ENCODE measurements at regions of chr2 and their contacts with region 1.

Region 1: DNA sequence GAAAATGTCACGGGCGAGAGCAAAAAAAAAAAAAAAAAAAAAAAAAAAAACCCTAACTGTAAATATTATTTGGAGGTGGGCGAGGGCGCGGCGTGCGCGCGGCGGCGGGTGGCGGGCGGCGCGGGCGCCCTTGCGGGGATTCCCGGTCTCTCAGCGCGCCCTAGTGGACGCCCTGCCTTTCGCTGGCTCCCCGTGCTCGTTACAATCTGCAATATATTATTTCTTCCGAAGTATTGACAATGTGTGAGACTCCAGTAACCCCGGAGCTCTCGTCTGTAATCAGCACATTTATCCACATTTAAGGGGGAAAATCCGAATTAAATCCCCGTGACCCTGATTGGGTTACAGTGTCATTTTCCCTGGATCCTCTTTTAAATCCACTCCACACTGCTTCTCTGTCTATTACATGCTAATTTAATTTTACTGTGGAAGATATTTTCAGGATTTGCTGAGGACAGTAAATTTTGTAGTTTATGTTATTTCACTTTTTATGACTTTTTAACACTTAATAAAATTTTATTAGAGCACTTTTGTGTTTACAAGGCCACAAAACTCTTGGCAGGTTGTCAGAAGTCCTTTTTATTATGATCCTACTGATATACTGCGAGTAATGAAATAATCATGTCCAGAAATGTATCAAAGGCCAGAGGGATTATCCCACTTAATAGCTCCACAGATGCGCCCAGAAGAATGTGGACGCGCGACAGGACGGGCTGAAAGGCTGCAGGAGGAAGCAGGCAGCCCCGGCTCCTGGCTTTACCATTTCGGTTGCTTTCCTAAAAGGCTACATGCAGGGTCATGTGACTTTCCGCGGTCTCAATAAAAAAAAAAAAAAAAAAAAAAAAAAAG is 369.1 kb downstream of the MTX2 start:
- DNase-seq: no peak
- ATAC-seq: peak; percentile 90
- H3K4me3 ChIP-seq: peak overlapping the region; percentile 65 to 66
- H3K27ac ChIP-seq: peak overlapping the region; percentile 79
- H3K4me1 ChIP-seq: no peaks in the 10 kb centered on the region
- H3K27me3 ChIP-seq: no peaks in the 10 kb centered on the region; the same call in 1 of the 2 replicates
- CTCF ChIP-seq: peak; percentile 92

Region 2: GRCh38 chr2:176126929-176127773 is 511.2 kb before region 1 on chr2:
- CTCF ChIA-PET with region 1: no interaction called
- POLR2A ChIA-PET with region 1: no interaction called
- in situ Hi-C with region 1: no loop called
- intact Hi-C with region 1: loop called (anchors 2 kb)
- DNase-seq: no peak
- ATAC-seq: peak; percentile 72; the same call in 1 of the 2 replicates
- H3K4me3 ChIP-seq: peak overlapping the region in 1 of 2 experiments; percentile 25; a peak in 1 of 4 replicates
- H3K27ac ChIP-seq: no peak overlapping the region
- H3K4me1 ChIP-seq: peaks cover 7% of the 10 kb centered on the region
- H3K27me3 ChIP-seq: no peaks in the 10 kb centered on the region
- CTCF ChIP-seq: peak; percentile 87

Region 3: GRCh38 chr2:176140513-176141317 is 497.7 kb before region 1 on chr2:
- CTCF ChIA-PET with region 1: interaction called, 5 read pairs
- POLR2A ChIA-PET with region 1: interaction called, 22 read pairs
- in situ Hi-C with region 1: no loop called
- intact Hi-C with region 1: loop called (anchors 2 kb)
- DNase-seq: no peak
- ATAC-seq: peak; percentile 92
- H3K4me3 ChIP-seq: peak overlapping the region; percentile 48 to 58
- H3K27ac ChIP-seq: peak overlapping the region; percentile 71
- H3K4me1 ChIP-seq: peaks cover 4% of the 10 kb centered on the region; the same call in 1 of the 2 replicates
- H3K27me3 ChIP-seq: no peaks in the 10 kb centered on the region
- CTCF ChIP-seq: peak; percentile 96

Region 4: DNA sequence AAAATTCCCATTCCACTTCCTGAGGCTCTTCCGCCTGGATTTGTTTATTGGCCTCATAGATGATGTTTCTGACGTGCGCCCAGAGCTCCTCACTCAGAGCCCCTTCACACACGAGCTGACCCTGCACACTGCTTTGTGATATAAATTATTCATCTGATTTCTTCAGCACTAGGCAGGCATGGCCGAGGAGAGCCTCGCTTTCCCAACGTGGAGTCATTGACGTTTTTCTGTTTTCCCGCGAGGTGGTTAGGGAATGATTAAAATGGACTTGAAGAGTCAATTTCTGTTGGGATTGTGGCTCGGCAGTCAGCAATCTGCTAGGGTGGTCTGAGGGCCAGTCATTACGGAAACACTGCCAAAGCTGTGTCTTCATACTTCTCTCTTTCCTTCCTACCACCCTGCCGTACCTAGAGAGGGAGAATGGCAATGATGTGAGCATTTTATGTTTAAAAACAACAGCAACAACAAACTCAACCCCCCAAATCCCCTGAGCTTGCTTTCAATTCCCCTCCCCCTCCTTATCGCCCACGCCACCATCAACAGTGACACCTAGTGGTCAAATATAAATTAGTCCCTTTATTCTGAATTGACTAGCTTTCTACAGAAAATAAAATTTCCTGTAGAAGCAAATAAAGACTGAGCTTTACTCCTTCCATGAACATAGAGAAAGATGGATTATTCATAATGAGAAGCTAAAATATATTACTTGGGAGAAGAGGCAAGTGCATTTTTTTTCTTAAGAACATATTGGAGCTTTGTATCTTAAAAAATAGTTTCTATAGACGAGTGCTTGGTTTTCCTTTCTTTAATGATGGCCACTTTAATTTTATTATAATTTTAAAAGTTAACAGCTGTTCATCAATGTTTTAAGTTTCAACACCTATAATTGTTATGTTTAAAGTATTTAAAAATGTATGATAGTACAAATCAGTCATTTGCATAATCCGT is 84.0 kb before region 1 on chr2:
- CTCF ChIA-PET with region 1: interaction called, 3 read pairs
- POLR2A ChIA-PET with region 1: no interaction called
- in situ Hi-C with region 1: no loop called
- intact Hi-C with region 1: loop called (anchors 5 kb)
- DNase-seq: peak; percentile 32
- ATAC-seq: peak; percentile 78
- H3K4me3 ChIP-seq: peak overlapping the region; percentile 49 to 78
- H3K27ac ChIP-seq: peak overlapping the region; percentile 73
- H3K4me1 ChIP-seq: peaks cover 5% of the 10 kb centered on the region; the same call in 1 of the 2 replicates
- H3K27me3 ChIP-seq: no peaks in the 10 kb centered on the region
- CTCF ChIP-seq: peak; percentile 81

Region 5: GRCh38 chr2:176595986-176596385 is 42.4 kb before region 1 on chr2:
- CTCF ChIA-PET with region 1: no interaction called
- POLR2A ChIA-PET with region 1: interaction called, 12 read pairs
- in situ Hi-C with region 1: no loop called
- intact Hi-C with region 1: no loop called
- DNase-seq: no peak
- ATAC-seq: no peak
- H3K4me3 ChIP-seq: no peak overlapping the region
- H3K27ac ChIP-seq: no peak overlapping the region
- H3K4me1 ChIP-seq: no peaks in the 10 kb centered on the region
- H3K27me3 ChIP-seq: no peaks in the 10 kb centered on the region
- CTCF ChIP-seq: no peak